Posterior vena cava (tissue), 2 donors: ENCODE measurements at regions of chr14 and their contacts with region 1.

Region 1: GRCh38 chr14:103500148-103500990 is 22.3 kb downstream of the CKB start:
- DNase-seq: peak; percentile 97

Region 2: GRCh38 chr14:103474893-103475292 is 25.5 kb before region 1 on chr14:
- intact Hi-C with region 1: loop called in 1 of 2 experiments (anchors 1 kb)
- DNase-seq: no peak

Region 3: DNA sequence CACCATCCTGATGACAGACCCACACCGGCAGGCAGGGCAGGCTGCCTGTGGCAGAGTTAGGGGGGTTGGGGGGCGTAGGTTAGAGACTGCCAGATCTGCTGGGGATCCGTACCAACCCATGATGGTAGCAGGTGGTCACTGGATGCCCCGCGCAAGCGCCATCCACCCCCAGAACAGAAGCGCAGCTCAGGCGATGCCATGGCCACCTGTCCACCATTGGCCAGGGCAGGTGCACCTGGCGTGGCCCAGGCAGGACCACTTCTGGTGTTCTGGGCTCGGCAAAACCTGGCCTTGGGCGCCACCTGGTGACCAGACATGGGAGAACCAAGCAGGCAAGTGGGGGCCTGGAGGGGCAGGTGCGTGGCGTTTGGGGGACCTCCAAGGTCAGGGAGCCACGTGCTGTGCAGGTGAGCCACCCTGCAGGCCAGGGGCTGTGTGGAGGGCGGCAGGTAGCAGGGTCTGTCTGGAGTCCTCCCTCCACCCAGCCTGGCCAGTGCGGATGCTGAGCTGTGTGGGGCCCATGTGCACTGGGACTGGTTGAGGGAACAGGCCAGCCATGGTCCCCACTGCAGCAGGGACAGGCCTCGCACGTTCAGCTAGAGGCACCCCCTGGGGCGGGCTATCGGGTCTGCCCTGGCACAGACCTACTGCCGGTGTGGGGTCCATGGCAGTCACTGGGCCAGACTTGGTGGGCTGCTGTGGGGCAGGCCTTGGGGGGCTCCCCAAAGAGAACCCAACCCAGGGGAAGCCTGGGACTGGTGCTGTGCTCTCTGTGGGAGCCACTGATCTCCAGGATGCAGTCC is 46.5 kb after region 1 on chr14:
- intact Hi-C with region 1: loop called in 1 of 2 experiments (anchors 5 kb)
- DNase-seq: peak; percentile 91